Tibial artery (tissue), 4 donors: ENCODE measurements at regions of chr10 and their contacts with region 1.

Region 1: DNA sequence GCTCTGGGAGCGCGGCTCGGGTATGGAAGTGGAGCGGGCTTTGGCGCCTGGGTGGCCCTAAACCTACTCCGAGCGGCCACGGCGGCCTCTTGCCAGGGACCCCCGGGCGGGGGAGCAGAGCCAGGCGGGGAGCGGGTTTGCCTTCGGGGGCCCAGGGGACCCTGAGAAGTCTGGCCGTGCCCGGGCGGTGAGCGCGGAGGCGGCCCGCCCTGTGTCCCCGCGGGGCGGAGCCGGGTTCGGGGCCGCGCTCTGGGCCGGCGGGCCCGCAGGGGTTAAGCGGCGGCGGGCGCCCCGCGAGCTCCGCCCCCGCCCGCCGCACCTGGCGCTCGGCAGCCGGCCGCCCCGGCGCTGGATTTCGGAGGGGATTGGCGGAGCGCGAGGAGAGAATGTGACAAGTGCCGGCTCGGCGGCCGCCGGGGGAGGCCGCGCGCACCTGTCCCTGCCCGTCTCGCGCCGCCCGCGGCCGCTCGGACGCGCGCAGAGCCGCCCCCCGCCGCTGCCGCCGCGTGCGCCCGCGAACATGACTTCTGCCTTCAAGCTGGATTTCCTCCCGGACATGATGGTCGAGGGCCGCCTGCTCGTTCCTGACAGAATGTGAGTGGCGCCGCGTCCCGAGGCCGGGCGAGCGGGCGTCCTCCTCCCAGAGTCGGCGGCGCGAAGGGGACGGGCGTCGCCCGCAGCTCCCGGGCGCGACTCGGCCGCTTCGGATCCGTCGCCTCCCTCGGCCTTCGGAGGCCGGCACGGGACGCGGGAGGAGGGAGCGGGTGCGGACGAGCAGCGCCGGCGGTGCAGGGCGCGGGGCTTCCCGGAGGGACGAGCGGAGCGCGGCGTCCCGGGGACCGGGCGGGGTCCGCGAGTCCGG is at the start of gene CELF2:
- DNase-seq: peak; percentile 41 to 73
- H3K4me3 ChIP-seq: peak within 1 kb of the TSS; percentile 91 to 99
- H3K27ac ChIP-seq: peak within 1 kb of the TSS; percentile 74 to 91
- H3K4me1 ChIP-seq: peaks cover 0 to 23% (median 12%) of the 10 kb centered on the region in 4 donors
- H3K27me3 ChIP-seq: no peaks in the 10 kb centered on the region
- CTCF ChIP-seq: no peak

Region 2: GRCh38 chr10:10623958-10624566 is 393.7 kb before region 1 on chr10:
- intact Hi-C with region 1: no loop called
- DNase-seq: no peak
- H3K4me3 ChIP-seq: no peak overlapping the region
- H3K27ac ChIP-seq: no peak overlapping the region
- H3K4me1 ChIP-seq: peaks cover 0 to 10% (median 0%) of the 10 kb centered on the region in 4 donors
- H3K27me3 ChIP-seq: no peaks in the 10 kb centered on the region
- CTCF ChIP-seq: no peak

Region 3: GRCh38 chr10:10804998-10805740 is 212.6 kb before region 1 on chr10:
- intact Hi-C with region 1: loop called (anchors 10 kb)
- DNase-seq: no peak
- H3K4me3 ChIP-seq: no peak overlapping the region
- H3K27ac ChIP-seq: peak overlapping the region; percentile 40 to 94
- H3K4me1 ChIP-seq: peaks cover 0 to 79% (median 31%) of the 10 kb centered on the region in 4 donors
- H3K27me3 ChIP-seq: no peaks in the 10 kb centered on the region
- CTCF ChIP-seq: no peak

Region 4: GRCh38 chr10:11448545-11449244 is 430.9 kb after region 1 on chr10:
- intact Hi-C with region 1: no loop called
- DNase-seq: no peak
- H3K4me3 ChIP-seq: no peak overlapping the region
- H3K27ac ChIP-seq: no peak overlapping the region
- H3K4me1 ChIP-seq: no peaks in the 10 kb centered on the region
- H3K27me3 ChIP-seq: peaks cover 0 to 6% of the 10 kb centered on the region in 2 donors
- CTCF ChIP-seq: no peak